Ascending aorta (tissue), 2 donors: ENCODE measurements at regions of chr10 and their contacts with region 1.

Region 1: DNA sequence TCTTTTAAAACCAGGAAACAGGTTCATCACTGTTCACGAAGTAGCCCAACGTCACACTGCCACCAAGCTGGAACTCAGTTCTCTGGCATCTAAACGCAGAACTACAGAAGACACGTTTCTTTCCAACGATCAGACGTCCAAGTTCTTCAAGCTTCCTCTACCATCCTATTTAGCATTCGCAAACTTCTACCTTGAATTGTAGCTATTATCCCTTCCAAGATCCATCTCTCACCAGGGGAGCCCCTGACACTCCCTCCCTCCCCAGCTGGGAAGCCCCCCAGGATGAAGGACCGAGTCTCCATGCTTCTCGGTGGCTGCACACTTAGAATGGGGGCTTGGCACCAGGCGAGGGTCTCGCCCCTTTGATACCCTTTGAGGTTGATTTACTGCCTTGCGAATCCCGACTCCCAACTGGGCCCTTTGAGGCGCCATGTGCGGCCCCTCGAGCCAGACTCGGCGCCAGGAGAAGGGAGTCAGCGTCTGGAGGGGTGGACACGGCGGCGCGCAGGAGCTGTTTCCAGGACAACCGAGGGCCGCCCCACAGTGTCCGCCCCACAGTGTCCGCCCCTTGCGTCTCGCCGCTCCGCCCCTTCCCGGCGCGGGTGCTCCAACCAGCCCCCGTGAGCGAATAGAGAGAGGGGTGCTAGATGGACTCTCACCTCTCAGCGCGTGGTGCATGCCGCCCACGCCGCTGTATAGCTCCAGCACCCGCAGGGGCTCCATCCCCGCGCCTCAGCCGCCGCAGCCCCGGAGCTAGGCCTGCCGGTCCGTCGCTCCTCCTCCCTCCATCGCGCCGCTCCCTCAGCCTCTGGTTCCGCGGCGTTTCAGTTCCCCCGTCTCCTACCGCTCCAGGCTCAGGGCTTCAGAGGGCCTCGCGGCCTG is at the start of gene TRDMT1:
- DNase-seq: peak; percentile 47 to 94
- H3K4me3 ChIP-seq: peak within 1 kb of the TSS; percentile 70 to 73
- H3K27ac ChIP-seq: peak within 1 kb of the TSS; percentile 94 to 96
- H3K4me1 ChIP-seq: peaks cover 0 to 18% of the 10 kb centered on the region in 2 donors
- H3K27me3 ChIP-seq: no peaks in the 10 kb centered on the region
- CTCF ChIP-seq: no peak
- total RNA-seq, gene TRDMT1: 5.7 TPM

Region 2: GRCh38 chr10:17075533-17076359 is 125.4 kb before region 1 on chr10:
- intact Hi-C with region 1: loop called (anchors 5 kb)
- DNase-seq: peak in 1 of 2 donors; percentile 75
- H3K4me3 ChIP-seq: no peak overlapping the region
- H3K27ac ChIP-seq: peak overlapping the region; percentile 82 to 84
- H3K4me1 ChIP-seq: peaks cover 0 to 27% of the 10 kb centered on the region in 2 donors
- H3K27me3 ChIP-seq: no peaks in the 10 kb centered on the region
- CTCF ChIP-seq: no peak

Region 3: DNA sequence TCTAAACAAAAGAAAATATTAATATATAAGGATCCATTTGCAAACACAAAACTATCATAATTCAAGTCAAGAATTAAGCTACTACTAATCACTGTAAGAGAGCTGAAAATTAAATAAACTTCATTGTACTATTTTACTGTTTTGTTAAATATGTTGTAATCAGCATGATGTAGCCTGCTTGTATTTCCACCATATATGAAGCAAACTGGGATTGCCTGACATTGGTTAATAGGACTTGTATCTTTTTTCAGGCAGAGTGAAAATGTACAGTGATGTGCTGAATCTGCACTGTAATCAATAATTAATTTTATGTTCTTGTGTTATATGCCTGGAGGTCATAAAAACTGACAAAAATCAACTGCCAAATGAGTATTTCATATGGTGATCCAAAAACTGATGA is 25.1 kb before region 1 on chr10:
- intact Hi-C with region 1: loop called (anchors 2 kb)
- DNase-seq: no peak
- H3K4me3 ChIP-seq: no peak overlapping the region
- H3K27ac ChIP-seq: no peak overlapping the region
- H3K4me1 ChIP-seq: peaks cover 0 to 29% of the 10 kb centered on the region in 2 donors
- H3K27me3 ChIP-seq: no peaks in the 10 kb centered on the region
- CTCF ChIP-seq: no peak

Region 4: GRCh38 chr10:17216217-17216900 is 15.2 kb after region 1 on chr10:
- intact Hi-C with region 1: loop called (anchors 2 kb)
- DNase-seq: peak; percentile 32 to 81
- H3K4me3 ChIP-seq: peak overlapping the region in 1 of 2 donors; percentile 20
- H3K27ac ChIP-seq: peak overlapping the region; percentile 89 to 93
- H3K4me1 ChIP-seq: peaks cover 6 to 50% of the 10 kb centered on the region in 2 donors
- H3K27me3 ChIP-seq: no peaks in the 10 kb centered on the region
- CTCF ChIP-seq: no peak

Region 5: GRCh38 chr10:17228091-17228940 is 27.2 kb after region 1 on chr10 and contains the start of gene VIM:
- intact Hi-C with region 1: loop called (anchors 1 kb)
- DNase-seq: peak; percentile 91 to 98
- H3K4me3 ChIP-seq: peak within 1 kb of the TSS; percentile 87 to 93
- H3K27ac ChIP-seq: peak within 1 kb of the TSS; percentile 97 to 99
- H3K4me1 ChIP-seq: peaks cover 0 to 22% of the 10 kb centered on the region in 2 donors
- H3K27me3 ChIP-seq: no peaks in the 10 kb centered on the region
- CTCF ChIP-seq: peak in 2 of 3 experiments; percentile 12 to 13
- total RNA-seq, gene VIM: 6,230 TPM

Region 6: GRCh38 chr10:17238445-17239291 is 37.5 kb after region 1 on chr10:
- intact Hi-C with region 1: no loop called
- DNase-seq: peak in 1 of 2 donors; percentile 85
- H3K4me3 ChIP-seq: peak overlapping the region in 1 of 2 donors; percentile 1
- H3K27ac ChIP-seq: peak overlapping the region; percentile 54 to 55
- H3K4me1 ChIP-seq: peaks cover 12 to 34% of the 10 kb centered on the region in 2 donors
- H3K27me3 ChIP-seq: no peaks in the 10 kb centered on the region
- CTCF ChIP-seq: no peak